ENCODE measurements at regions of chr15 and their contacts with region 1.

Region 1: DNA sequence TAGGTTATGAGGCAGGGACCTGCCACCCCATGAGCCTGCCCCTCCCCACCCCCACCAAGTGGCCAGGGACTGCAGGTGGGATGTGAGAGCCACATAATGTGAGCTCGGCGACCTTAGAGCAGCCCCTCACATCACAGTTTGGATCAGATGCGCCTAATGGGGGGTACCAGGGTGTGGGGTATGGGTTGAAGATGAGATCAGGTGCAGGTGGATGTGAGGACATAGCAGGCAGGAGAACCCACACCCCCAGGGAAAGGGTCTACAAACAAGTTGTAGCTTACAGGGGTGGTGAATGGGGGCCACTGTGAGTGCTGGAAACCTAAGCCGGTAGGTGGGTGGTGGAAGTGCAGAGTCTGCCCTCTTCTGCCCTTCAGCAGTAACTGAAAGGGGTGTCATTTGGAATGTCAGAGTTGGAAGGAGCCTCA is 94.0 kb downstream of the CORO2B start:
- DNase-seq: peak; percentile 7
- ATAC-seq: no peak
- H3K4me3 ChIP-seq: no peak overlapping the region
- H3K27ac ChIP-seq: no peak overlapping the region
- H3K4me1 ChIP-seq: no peaks in the 10 kb centered on the region
- H3K27me3 ChIP-seq: no peaks in the 10 kb centered on the region
- CTCF ChIP-seq: peak; percentile 31; the same call in 1 of the 2 replicates

Region 2: DNA sequence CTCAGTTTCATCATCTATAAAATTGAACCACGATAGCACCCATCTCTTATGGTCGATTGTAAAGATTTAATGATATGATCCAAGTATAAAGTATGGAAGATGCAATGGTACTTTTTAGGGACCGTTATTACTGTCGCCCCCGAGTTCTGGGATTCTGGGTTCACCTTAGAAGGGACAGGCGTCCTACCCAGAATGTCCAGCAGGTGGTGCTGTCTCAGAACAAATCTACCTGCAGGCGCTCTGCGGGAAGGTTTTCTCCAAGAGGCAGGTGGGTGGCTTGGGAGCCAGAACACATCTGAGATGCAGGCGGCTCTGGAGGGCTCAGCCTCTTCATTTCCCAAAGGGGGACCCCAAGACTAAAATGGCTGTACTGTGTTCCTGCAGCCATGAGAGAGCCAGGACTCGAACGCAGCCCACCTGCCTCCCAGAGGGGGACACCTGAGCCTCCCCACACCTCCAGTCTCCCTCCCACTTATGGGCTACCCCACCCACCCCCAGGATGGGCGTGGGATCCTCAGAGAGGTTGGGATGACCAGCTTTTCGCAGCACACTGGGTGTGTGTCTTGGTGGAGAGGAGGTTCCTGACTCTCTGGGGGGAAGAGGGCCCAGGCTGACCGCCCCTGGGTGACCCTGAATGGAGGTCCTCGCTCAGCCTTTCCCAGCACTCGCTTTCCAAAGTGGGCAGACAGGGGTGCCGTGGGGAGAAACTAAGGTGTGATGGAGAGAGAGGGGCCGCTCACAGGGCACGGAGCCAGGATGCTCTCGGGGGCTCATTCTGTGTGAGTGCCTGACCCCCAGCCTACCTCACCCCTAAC is 122.1 kb before region 1 on chr15:
- CTCF ChIA-PET with region 1: interaction called, 17 read pairs
- POLR2A ChIA-PET with region 1: no interaction called
- intact Hi-C with region 1: loop called (anchors 1 kb)
- DNase-seq: peak; percentile 75
- ATAC-seq: 0 out of 2 replicates have a peak, but pooled peaks have one; percentile 42
- H3K4me3 ChIP-seq: no peak overlapping the region
- H3K27ac ChIP-seq: no peak overlapping the region
- H3K4me1 ChIP-seq: no peaks in the 10 kb centered on the region; the same call in 1 of the 2 replicates
- H3K27me3 ChIP-seq: no peaks in the 10 kb centered on the region; the same call in 1 of the 2 replicates
- CTCF ChIP-seq: peak; percentile 88

Region 3: DNA sequence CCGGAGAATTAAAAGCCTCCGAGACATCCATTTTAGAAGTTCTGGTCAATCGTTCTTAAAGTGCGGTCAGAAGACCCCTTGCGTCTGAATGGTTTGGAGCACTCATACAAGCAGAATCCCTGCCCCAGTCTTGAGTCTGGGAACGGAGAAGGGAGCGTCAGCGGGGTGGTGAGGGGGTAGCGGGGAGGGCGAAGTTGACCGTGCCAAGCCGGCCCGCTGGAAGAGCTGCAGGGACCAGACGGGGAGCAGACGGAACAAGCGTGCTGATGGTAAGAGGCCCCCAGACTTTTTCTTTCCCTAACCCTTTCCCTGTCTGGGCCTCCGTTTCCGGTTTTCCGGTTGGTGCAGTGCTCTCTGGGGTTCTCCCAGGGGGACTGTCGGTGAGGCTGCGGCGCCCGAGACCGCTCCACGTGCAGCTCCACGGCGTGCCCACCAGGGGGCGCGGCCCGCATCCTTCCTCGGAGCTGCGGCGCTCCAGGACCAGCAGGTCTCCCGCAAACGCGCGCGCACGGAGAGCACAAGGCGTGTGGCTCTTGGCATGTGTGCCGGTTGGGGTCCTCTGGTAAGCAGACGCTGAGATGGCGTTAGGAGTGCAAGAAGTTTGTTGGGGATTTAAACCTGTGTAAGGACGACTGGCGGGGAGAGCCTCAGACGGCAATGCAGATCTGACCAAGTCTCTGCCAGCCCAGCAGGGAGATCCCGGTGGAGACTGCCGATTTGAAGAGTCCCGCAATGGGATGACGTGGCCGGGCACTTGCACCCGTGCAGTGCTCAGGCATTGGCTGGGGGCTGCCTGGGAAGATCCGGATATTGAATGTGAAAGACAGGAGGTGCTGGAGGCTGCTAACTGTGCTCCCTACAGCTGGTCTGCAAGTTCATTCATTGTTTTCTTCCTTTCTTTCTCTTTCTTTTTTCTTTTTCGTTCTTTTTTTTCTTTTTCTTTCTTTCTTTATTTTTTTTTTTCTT is 113.2 kb before region 1 on chr15:
- CTCF ChIA-PET with region 1: interaction called, 35 read pairs
- POLR2A ChIA-PET with region 1: no interaction called
- intact Hi-C with region 1: loop called (anchors 2 kb)
- DNase-seq: peak; percentile 72
- ATAC-seq: peak; percentile 93
- H3K4me3 ChIP-seq: peak overlapping the region; percentile 70
- H3K27ac ChIP-seq: no peak overlapping the region
- H3K4me1 ChIP-seq: no peaks in the 10 kb centered on the region
- H3K27me3 ChIP-seq: no peaks in the 10 kb centered on the region
- CTCF ChIP-seq: peak; percentile 91

Region 4: GRCh38 chr15:68578174-68578979 is 94.4 kb before region 1 on chr15:
- CTCF ChIA-PET with region 1: no interaction called
- POLR2A ChIA-PET with region 1: no interaction called
- intact Hi-C with region 1: loop called (anchors 5 kb)
- DNase-seq: peak; percentile 32
- ATAC-seq: peak; percentile 65
- H3K4me3 ChIP-seq: peak overlapping the region; percentile 80
- H3K27ac ChIP-seq: no peak overlapping the region
- H3K4me1 ChIP-seq: peaks cover 7% of the 10 kb centered on the region; the same call in 1 of the 2 replicates
- H3K27me3 ChIP-seq: no peaks in the 10 kb centered on the region
- CTCF ChIP-seq: peak; percentile 29; the same call in 1 of the 2 replicates

Region 5: DNA sequence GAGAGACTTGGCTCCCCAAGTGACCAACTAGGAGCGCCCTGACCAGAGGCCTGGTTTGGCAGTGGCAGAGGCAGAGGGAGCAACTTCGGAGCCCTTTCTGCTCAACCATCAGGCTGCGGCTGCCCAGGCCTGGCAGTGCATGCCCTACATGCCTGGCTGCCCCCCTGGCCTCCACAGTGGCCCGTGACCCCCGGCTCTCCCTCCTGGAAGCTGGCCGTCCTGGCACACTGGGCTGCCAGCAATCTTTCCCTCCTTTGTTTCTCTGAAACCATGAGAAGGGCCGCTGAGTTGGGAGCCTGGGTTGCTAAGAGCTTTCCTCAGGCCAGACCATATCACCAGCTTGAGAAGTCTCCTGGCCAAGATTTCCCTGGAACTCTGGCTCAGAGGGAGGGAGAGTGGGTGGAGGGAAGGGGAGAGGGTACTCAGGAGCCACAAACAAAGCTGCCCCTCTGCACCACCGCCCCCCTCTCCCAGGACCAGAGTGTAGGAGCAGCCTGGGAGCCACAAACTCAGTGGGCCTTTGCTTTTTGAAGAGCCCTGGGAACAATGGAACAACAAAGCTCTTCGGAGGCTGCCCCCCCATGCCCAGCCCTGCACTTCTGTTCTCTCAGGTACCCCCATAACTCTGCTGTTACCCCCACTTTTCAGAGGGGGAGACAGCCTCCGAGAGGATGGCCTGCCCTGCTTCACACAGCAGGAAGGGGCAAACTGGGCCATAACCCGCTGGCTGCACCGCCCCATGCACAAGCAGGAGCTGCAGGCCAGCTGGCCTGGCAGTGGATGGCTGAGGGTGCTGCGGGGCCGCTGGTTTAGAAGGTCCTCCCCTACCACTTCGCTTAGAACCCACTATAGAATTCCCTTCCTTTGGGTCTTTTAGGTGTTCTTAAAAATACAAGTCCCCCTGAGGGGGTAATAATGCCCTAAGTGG is 82.7 kb before region 1 on chr15:
- CTCF ChIA-PET with region 1: no interaction called
- POLR2A ChIA-PET with region 1: no interaction called
- intact Hi-C with region 1: no loop called
- DNase-seq: no peak
- ATAC-seq: no peak
- H3K4me3 ChIP-seq: no peak overlapping the region
- H3K27ac ChIP-seq: no peak overlapping the region
- H3K4me1 ChIP-seq: peaks cover 15% of the 10 kb centered on the region
- H3K27me3 ChIP-seq: no peaks in the 10 kb centered on the region
- CTCF ChIP-seq: no peak

Measured in PC-3 (cell line).